ENCODE measurements at regions of chr20 and their contacts with region 1.

Region 1: GRCh38 chr20:37007898-37008649 is 56.6 kb upstream of the SAMHD1 start:
- DNase-seq: peak; percentile 56
- ATAC-seq: peak; percentile 93
- H3K4me3 ChIP-seq: no peak overlapping the region
- H3K27ac ChIP-seq: no peak overlapping the region
- H3K4me1 ChIP-seq: no peaks in the 10 kb centered on the region
- H3K27me3 ChIP-seq: no peaks in the 10 kb centered on the region
- CTCF ChIP-seq: peak; percentile 54
- POLR2A ChIP-seq: no peak
- RAD21 ChIP-seq: peak; percentile 52

Region 2: DNA sequence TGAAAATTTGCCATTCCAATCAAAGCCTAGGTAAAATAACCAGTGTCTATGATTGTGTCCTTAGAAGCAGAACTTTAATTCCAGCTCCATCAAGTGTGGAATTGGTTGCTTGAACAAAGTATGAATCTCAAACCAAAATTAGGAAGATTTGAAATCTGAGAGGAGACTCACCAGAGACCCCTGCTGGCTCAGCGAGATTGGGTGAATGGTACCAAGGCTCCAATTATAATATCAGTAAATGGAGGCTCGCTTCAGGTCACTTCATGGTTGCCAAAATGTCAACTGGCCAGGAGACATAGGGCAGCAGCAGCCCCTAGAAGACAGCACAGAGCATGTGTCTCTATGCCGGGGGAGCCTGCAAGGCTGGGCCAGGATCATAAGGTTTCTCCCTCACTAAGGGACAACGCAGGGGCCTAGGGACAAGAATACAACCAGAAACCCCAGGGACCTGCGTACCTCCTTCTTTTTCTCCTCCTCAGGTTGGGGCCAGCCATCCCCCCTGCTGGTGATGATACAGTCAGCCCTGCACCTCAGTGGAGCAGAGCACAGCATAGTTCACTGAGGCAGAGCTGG is 73.7 kb after region 1 on chr20:
- CTCF ChIA-PET with region 1: interaction called, 11 read pairs
- POLR2A ChIA-PET with region 1: no interaction called
- dilution Hi-C with region 1: no loop called
- in situ Hi-C with region 1: no loop called
- intact Hi-C with region 1: loop called (anchors 1 kb)
- DNase-seq: no peak
- ATAC-seq: peak; percentile 72
- H3K4me3 ChIP-seq: no peak overlapping the region
- H3K27ac ChIP-seq: no peak overlapping the region
- H3K4me1 ChIP-seq: peaks cover 3% of the 10 kb centered on the region
- H3K27me3 ChIP-seq: no peaks in the 10 kb centered on the region
- CTCF ChIP-seq: peak; percentile 55
- POLR2A ChIP-seq: no peak
- RAD21 ChIP-seq: peak; percentile 30; the same call in 1 of the 2 replicates

Region 3: GRCh38 chr20:37178839-37179670 is 171.0 kb after region 1 on chr20 and contains the starts of genes MROH8 and RPN2:
- CTCF ChIA-PET with region 1: interaction called, 5 read pairs
- POLR2A ChIA-PET with region 1: no interaction called
- dilution Hi-C with region 1: no loop called
- in situ Hi-C with region 1: no loop called
- intact Hi-C with region 1: loop called (anchors 5 kb)
- DNase-seq: peak; percentile 98
- ATAC-seq: peak; percentile 97
- H3K4me3 ChIP-seq: peak within 1 kb of the TSS; percentile 88
- H3K27ac ChIP-seq: peak within 1 kb of the TSS; percentile 99
- H3K4me1 ChIP-seq: peaks cover 6% of the 10 kb centered on the region
- H3K27me3 ChIP-seq: no peaks in the 10 kb centered on the region
- CTCF ChIP-seq: no peak
- POLR2A ChIP-seq: no peak
- RAD21 ChIP-seq: no peak
- total RNA-seq, gene MROH8: 1.1 and 1.8 TPM in 2 replicates
- total RNA-seq, gene RPN2: 232 and 305 TPM in 2 replicates

Region 4: DNA sequence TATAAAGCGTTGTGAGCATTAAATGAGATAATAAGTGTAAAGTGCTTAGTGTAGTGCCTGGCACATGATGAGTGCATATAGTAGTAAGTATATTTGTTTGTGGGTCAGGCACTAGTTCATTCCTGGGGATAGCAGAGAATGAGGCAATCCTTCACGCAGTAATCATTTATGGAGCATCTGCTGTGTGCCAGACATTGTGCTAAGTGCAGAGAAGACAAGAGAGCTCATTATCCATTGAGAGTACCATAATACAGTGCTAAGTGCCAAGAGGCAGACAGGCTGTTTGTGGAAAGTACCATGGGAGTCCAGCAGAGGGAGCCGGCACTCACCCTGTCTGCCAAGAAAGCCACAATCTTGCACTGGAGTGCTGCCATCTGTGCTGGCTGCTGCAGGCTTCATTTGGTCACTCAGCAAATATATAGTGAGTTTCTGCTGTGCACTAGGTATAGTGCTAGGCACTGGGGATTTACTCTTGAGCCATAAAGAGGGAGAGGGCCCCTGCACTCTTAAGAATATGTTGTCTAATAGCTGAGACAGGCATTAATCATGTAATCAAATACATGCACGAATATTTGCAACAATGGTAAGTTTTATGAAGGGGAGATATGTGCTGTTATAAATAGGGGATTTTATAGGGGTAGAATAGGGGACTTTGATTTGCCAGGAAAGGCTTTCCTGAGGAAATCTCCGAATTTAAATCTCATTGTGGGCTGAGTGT is 184.2 kb after region 1 on chr20:
- CTCF ChIA-PET with region 1: interaction called, 5 read pairs
- POLR2A ChIA-PET with region 1: no interaction called
- dilution Hi-C with region 1: no loop called
- in situ Hi-C with region 1: no loop called
- intact Hi-C with region 1: loop called (anchors 5 kb)
- DNase-seq: peak; percentile 89
- ATAC-seq: peak; percentile 88
- H3K4me3 ChIP-seq: no peak overlapping the region
- H3K27ac ChIP-seq: no peak overlapping the region
- H3K4me1 ChIP-seq: no peaks in the 10 kb centered on the region
- H3K27me3 ChIP-seq: no peaks in the 10 kb centered on the region
- CTCF ChIP-seq: peak; percentile 87
- POLR2A ChIP-seq: no peak
- RAD21 ChIP-seq: peak; percentile 56

Region 5: GRCh38 chr20:37336369-37337207 is 328.5 kb after region 1 on chr20:
- CTCF ChIA-PET with region 1: no interaction called
- POLR2A ChIA-PET with region 1: no interaction called
- dilution Hi-C with region 1: no loop called
- in situ Hi-C with region 1: no loop called
- intact Hi-C with region 1: no loop called
- DNase-seq: peak; percentile 20
- ATAC-seq: peak; percentile 57
- H3K4me3 ChIP-seq: no peak overlapping the region
- H3K27ac ChIP-seq: no peak overlapping the region
- H3K4me1 ChIP-seq: peaks cover 8% of the 10 kb centered on the region
- H3K27me3 ChIP-seq: no peaks in the 10 kb centered on the region
- CTCF ChIP-seq: no peak
- POLR2A ChIP-seq: no peak
- RAD21 ChIP-seq: no peak

Region 6: GRCh38 chr20:37598100-37598543 is 590.0 kb after region 1 on chr20:
- CTCF ChIA-PET with region 1: no interaction called
- POLR2A ChIA-PET with region 1: no interaction called
- dilution Hi-C with region 1: no loop called
- in situ Hi-C with region 1: no loop called
- intact Hi-C with region 1: no loop called
- DNase-seq: no peak
- ATAC-seq: no peak
- H3K4me3 ChIP-seq: no peak overlapping the region
- H3K27ac ChIP-seq: no peak overlapping the region
- H3K4me1 ChIP-seq: no peaks in the 10 kb centered on the region
- H3K27me3 ChIP-seq: peaks cover 36% of the 10 kb centered on the region
- CTCF ChIP-seq: no peak
- POLR2A ChIP-seq: no peak
- RAD21 ChIP-seq: no peak